AG04449 (cell line): ENCODE measurements at regions of chr1 and their contacts with region 1.

Region 1: DNA sequence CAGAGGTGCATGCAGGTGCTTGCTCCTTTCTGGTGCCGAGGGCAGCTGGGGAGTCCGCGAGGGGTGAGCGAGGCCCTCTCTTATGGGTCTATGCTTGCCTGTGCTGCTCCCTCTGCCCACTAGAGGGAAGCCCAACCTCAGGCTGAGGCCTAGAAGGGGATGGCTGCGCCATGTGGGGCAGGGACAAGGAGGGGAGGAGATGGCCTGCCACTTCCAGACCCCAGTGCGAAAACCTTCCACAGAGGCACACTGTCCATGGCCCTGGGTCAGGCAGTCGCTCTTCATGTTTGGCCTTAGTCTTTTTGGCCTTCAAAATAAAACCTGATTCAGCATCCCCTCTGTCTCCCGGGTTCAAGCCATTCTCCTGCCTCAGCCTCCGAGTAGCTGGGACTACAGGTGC is 14.0 kb downstream of the RHBG start:
- DNase-seq: no peak
- H3K4me3 ChIP-seq: no peak overlapping the region
- CTCF ChIP-seq: peak; percentile 93

Region 2: GRCh38 chr1:156394835-156395461 is 11.9 kb after region 1 on chr1:
- CTCF ChIA-PET with region 1: interaction called, 186 read pairs
- POLR2A ChIA-PET with region 1: no interaction called
- DNase-seq: no peak
- H3K4me3 ChIP-seq: no peak overlapping the region
- CTCF ChIP-seq: no peak

Region 3: DNA sequence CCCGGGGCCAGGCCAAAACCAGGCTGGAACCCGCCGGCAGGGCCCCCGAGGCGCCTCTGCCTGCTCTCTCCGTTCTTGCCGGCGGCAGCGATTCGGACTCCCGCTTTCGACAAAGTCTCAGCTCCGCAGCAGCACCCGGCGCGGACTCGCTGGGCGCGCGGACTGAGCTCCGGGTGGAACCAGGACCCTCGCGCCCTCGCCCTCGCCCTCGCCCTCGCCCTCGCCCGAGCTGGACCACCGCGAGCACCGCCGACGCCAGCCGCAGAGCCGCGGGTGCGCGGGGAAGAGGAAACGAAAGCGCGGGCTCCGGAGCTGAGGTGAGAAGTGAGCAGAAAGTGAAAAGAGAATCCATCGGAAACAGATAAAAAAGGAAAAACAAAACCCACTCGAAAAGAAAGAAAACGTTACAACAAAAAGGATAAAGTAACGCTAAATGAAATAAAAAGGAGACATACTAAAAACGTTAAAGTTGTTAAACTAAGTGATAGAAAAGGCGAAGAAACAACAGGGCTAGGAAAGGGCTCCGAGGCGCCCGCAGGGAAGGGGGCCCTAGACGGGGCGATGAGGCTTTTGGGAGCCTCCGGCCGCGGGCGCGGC is 52.6 kb after region 1 on chr1:
- CTCF ChIA-PET with region 1: interaction called, 190 read pairs
- POLR2A ChIA-PET with region 1: no interaction called
- DNase-seq: no peak
- H3K4me3 ChIP-seq: no peak overlapping the region
- CTCF ChIP-seq: no peak

Region 4: DNA sequence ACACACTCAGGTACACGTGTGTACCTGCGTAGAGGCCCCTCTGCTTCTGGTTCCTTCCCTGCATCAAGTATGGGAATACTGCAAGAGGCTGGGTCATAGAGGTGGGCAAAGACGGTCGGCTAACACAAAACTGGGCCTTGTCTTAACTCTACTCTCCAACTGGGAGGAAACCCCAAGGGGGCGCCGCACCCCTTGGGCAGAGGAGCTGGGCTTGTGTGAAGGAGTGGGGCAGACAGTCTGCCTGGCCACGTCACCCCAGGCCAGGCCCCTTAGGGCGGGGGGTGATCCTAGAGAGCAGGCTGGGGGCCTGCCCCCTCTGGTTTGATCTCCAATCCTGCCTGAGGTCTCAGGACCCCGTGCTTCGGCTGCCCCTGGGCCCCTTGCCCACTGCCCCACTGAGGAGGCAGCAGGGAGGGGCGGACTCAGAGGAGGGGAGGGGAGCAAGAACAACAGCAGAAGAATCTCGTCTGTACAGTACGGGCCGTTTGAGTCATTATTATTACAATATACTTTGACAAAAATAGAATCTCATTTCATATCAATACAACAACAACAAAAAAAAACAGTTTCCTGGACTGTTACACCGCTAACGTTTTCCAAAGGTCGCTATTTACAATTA is 82.8 kb after region 1 on chr1:
- CTCF ChIA-PET with region 1: interaction called, 40 read pairs
- POLR2A ChIA-PET with region 1: no interaction called
- DNase-seq: no peak
- H3K4me3 ChIP-seq: no peak overlapping the region
- CTCF ChIP-seq: peak; percentile 17

Region 5: GRCh38 chr1:156601122-156601830 is 218.3 kb after region 1 on chr1 and contains the start of gene GPATCH4:
- CTCF ChIA-PET with region 1: interaction called, 39 read pairs
- POLR2A ChIA-PET with region 1: no interaction called
- DNase-seq: peak; percentile 53
- H3K4me3 ChIP-seq: peak within 1 kb of the TSS; percentile 89
- CTCF ChIP-seq: no peak

Region 6: DNA sequence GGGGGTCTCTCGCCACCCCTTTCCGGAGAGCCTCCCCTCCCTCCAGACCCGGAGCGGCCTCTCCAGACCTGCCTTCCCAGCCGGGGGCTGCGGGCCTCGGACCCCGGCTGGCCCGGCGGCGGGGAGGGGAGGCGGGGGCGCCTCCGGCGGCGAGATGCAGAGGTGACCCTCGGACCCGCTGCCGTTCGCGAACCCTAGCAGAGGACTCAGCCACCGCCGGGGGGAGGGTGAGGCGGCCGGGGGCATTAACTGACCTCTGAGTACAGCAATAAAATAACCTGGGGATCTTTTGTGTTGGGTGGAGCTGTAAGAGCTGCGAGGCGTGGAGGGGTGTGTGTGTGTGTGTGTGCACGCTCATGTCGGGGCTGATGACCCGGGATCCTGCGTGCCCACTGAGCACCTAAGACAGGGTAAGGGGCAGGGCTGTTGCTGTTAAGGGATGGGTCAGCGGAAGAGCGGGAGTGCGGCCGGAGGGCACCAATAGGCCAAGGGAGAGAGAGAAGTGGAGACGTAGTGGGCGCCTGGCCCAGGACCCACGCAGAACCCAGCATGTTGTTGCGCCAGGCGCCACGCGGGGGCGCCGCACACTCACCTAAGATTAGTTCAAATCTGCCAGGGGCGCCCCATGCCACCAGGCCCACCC is 242.5 kb after region 1 on chr1:
- CTCF ChIA-PET with region 1: interaction called, 33 read pairs
- POLR2A ChIA-PET with region 1: no interaction called
- DNase-seq: no peak
- H3K4me3 ChIP-seq: no peak overlapping the region
- CTCF ChIP-seq: peak; percentile 74